ENCODE measurements at regions of chr5 and their contacts with region 1.

Region 1: GRCh38 chr5:144142139-144142823 is 28.2 kb downstream of the YIPF5 start:
- DNase-seq: no peak
- H3K4me3 ChIP-seq: no peak overlapping the region
- H3K27ac ChIP-seq: no peak overlapping the region
- H3K4me1 ChIP-seq: no peaks in the 10 kb centered on the region
- H3K27me3 ChIP-seq: no peaks in the 10 kb centered on the region
- CTCF ChIP-seq: peak in 3 of 4 experiments; percentile 45 to 53 (median 53)
- POLR2A ChIP-seq: no peak

Region 2: GRCh38 chr5:142922223-142922952 is 1219.9 kb before region 1 on chr5:
- intact Hi-C with region 1: loop called (anchors 5 kb)
- DNase-seq: no peak
- H3K4me3 ChIP-seq: no peak overlapping the region
- H3K27ac ChIP-seq: no peak overlapping the region
- H3K4me1 ChIP-seq: no peaks in the 10 kb centered on the region
- H3K27me3 ChIP-seq: no peaks in the 10 kb centered on the region
- CTCF ChIP-seq: peak in 3 of 4 experiments; percentile 40 to 74 (median 67)
- POLR2A ChIP-seq: no peak

Region 3: DNA sequence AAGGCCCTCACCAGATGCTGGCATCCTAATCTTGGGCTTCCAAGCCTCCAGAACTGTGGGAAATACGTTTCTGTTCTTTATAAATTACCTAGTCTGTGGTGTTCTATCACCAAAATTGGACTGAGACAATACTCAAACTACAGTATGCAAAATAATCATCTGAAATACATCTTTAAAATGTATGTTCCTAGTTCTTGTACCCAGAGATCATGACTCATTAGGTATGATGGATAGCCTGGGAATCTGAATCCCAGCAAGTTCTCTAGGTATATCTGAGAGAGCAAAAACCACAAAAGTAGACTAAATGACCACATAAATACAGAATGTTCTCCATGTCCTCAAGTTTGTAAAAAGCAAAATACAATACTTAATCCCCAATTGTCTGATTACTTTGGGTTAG is 138.1 kb before region 1 on chr5:
- intact Hi-C with region 1: no loop called
- DNase-seq: no peak
- H3K4me3 ChIP-seq: no peak overlapping the region
- H3K27ac ChIP-seq: no peak overlapping the region
- H3K4me1 ChIP-seq: no peaks in the 10 kb centered on the region
- H3K27me3 ChIP-seq: no peaks in the 10 kb centered on the region
- CTCF ChIP-seq: no peak
- POLR2A ChIP-seq: no peak